ENCODE measurements at regions of chr18 and their contacts with region 1.

Region 1: GRCh38 chr18:62186774-62187542 is at the starts of genes PIGN and RELCH:
- DNase-seq: peak; percentile 99
- H3K4me3 ChIP-seq: peak within 1 kb of the TSS; percentile 86 to 97 (median 94)
- H3K27ac ChIP-seq: peak within 1 kb of the TSS; percentile 79
- H3K4me1 ChIP-seq: peaks cover 34% of the 10 kb centered on the region
- H3K27me3 ChIP-seq: no peaks in the 10 kb centered on the region
- CTCF ChIP-seq: no peak
- POLR2A ChIP-seq: peak; percentile 88
- total RNA-seq, gene PIGN: 26.1 and 31.1 TPM in 2 replicates
- total RNA-seq, gene RELCH: 20.7 and 25.2 TPM in 2 replicates

Region 2: GRCh38 chr18:62198259-62198658 is 11.3 kb after region 1 on chr18:
- CTCF ChIA-PET with region 1: interaction called, 16 read pairs
- POLR2A ChIA-PET with region 1: interaction called, 4 read pairs
- dilution Hi-C with region 1: no loop called
- intact Hi-C with region 1: loop called (anchors 1 kb)
- DNase-seq: no peak
- H3K4me3 ChIP-seq: no peak overlapping the region
- H3K27ac ChIP-seq: no peak overlapping the region
- H3K4me1 ChIP-seq: peaks cover 4% of the 10 kb centered on the region
- H3K27me3 ChIP-seq: no peaks in the 10 kb centered on the region
- CTCF ChIP-seq: no peak
- POLR2A ChIP-seq: no peak

Region 3: DNA sequence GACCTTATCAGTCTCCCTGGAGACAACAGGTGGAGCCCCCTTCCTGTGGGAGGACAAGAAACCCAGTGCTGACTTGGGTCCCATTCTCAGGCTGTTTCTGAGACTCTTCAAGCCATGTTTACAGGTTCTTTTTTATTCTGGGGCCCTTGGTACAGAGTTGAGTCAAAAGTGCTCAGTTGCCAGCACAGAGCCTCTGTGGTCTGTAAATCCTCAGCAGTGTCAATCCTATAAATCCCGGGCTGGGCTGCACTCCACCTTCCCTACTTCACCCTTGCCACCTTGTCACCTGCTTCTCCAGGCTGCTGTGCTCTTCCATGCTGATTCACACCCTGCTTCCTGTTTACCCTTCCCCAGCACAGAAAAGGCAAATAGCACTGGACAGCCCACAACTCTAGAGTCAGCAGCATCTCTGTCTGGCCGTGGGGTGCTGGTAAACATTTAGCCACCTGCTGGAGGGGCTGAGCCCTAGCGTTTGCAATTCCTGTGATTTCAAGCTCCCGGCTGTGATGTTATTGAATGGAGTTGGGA is 212.9 kb after region 1 on chr18:
- CTCF ChIA-PET with region 1: interaction called, 3 read pairs
- POLR2A ChIA-PET with region 1: no interaction called
- dilution Hi-C with region 1: no loop called
- intact Hi-C with region 1: loop called (anchors 5 kb)
- DNase-seq: peak; percentile 46
- H3K4me3 ChIP-seq: no peak overlapping the region
- H3K27ac ChIP-seq: no peak overlapping the region
- H3K4me1 ChIP-seq: peaks cover 4% of the 10 kb centered on the region
- H3K27me3 ChIP-seq: no peaks in the 10 kb centered on the region
- CTCF ChIP-seq: peak; percentile 46 to 52
- POLR2A ChIP-seq: no peak

Measured in endothelial cell of umbilical vein (primary cell).